ENCODE measurements at regions of chr2 and their contacts with region 1.

Region 1: DNA sequence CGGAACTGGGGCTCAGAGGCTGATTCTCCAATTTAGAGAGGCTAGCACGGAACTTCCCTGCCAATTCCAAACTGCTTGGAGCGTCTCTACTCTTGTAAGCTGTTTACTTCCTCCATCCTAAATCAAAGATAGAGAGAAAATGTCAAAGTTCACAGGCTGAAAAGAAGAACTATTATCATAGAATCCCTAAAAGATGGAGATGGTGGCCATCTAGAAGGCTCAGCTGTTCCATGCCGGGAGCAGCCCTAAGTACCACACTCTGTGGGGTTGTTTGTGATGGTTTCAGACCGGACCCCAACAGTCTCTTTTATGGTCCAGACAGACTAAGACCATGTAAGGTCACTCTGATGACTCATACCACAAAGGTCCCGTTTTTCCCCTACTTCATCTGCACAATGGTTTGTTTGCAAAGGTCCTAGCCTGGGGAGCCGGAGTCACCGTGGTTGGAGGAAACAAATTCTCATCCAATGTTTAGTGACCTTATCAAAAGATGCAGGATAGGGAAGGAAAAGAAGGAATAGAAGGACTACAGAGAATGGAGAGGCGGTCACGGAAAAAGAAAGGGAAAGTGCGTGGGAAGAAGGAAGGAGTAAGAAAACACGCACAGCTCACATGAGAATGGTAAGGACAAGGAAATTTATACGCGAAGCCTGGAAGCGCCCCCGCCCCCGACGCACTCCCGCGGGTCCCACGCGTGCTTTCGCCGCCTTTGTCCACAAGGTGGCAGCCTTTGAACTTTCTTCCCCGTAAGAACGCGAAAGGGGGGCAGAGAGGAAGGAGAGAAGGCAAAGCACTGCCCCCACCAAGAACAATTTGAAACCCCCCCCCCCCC is 453 bp upstream of the ANTXR1 start:
- DNase-seq: no peak
- H3K4me3 ChIP-seq: peak overlapping the region; percentile 90 to 95 (median 94)
- H3K27ac ChIP-seq: peak overlapping the region; percentile 44
- H3K4me1 ChIP-seq: peaks cover 13% of the 10 kb centered on the region
- H3K27me3 ChIP-seq: no peaks in the 10 kb centered on the region
- CTCF ChIP-seq: peak; percentile 54 to 77

Region 2: DNA sequence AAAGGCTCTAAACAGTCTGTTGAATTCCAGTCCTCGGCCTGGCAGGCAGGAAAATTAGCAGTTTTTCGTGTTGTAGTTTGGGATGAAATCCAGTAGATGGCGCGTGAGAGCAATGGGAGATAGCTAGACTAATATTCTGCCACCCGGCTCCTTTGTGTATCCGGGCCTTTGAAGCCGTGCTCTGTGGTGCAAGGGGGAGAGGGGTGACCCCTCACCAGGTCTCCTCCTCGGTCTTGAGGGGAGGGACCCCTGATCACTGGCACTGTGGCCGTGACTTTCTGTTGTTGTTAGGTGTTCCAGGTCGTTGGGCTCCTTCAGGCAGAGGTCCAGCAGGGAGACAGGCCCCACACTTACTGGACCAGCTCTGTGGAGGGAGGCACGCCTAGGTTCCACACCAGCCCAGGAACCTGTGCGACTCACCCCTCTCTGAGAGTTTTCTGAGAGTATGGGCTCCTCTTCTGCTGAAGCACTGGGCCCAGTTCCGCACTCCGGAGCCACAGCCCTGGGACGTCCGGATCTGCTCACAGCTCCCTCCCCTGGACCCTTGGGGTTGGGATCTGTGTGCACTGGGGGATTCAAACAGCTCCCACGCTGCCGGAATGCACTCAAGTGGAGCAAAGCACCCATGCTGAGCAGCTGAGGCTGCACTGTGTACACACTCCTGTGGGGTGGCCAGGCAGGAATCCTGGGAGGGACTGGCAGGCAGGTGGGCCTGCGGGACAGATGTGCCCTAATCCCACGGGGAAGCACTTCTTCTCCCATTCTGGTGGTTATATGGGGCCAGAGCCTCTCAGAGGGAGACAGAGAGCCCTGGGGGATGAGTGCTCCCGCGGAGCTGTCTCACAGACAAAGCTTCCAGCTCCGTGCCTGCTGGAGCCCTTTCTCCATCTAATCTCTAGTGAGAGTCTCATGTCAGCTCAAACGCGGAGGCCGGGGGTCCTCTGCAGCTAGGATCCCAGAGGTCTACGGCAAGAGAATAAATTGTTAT is 68.7 kb before region 1 on chr2:
- CTCF ChIA-PET with region 1: interaction called, 3 read pairs
- dilution Hi-C with region 1: no loop called
- in situ Hi-C with region 1: no loop called
- intact Hi-C with region 1: loop called (anchors 2 kb)
- DNase-seq: peak; percentile 61
- H3K4me3 ChIP-seq: no peak overlapping the region
- H3K27ac ChIP-seq: no peak overlapping the region
- H3K4me1 ChIP-seq: no peaks in the 10 kb centered on the region
- H3K27me3 ChIP-seq: no peaks in the 10 kb centered on the region
- CTCF ChIP-seq: peak; percentile 63 to 84

Region 3: DNA sequence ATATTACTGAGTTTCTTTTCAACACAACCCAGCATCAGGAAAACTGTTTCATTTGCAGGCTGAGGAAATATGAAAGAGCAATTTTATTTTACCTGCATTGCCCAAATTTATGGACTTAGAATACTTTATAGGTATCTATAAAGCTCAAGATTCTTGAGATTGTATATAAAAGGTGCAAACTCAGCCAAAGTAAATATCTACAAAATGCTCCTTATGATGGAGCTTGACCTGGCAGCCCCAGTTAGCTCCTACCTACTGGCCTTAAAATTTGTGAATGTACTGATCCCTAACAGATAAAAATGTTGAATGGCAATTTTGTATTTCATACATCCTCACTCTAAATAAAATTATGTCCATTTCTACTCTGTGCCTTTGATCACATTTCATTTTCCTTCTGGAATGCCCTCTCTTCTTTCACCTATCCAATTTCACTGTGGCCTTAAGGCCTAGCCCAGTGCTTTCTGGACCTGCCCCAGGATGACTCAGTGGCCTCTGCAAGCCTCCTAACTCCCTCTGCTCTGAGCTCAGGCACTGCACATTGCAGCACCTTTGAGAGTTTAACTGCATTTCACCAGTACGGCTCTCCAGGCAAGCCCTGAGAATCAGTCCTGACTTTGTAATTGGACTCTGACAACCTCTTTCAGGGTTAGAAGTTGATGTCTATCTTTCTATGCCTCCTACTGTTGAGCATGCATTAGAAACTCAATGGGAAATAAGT is 126.4 kb after region 1 on chr2:
- CTCF ChIA-PET with region 1: interaction called, 3 read pairs
- dilution Hi-C with region 1: no loop called
- in situ Hi-C with region 1: no loop called
- intact Hi-C with region 1: loop called (anchors 5 kb)
- DNase-seq: peak; percentile 81
- H3K4me3 ChIP-seq: no peak overlapping the region
- H3K27ac ChIP-seq: peak overlapping the region; percentile 64
- H3K4me1 ChIP-seq: peaks cover 32% of the 10 kb centered on the region
- H3K27me3 ChIP-seq: no peaks in the 10 kb centered on the region
- CTCF ChIP-seq: peak in 1 of 2 donors; percentile 3

Region 4: GRCh38 chr2:69298261-69298660 is 285.7 kb after region 1 on chr2:
- CTCF ChIA-PET with region 1: no interaction called
- dilution Hi-C with region 1: no loop called
- in situ Hi-C with region 1: no loop called
- intact Hi-C with region 1: loop called (anchors 2 kb)
- DNase-seq: peak; percentile 96
- H3K4me3 ChIP-seq: no peak overlapping the region
- H3K27ac ChIP-seq: no peak overlapping the region
- H3K4me1 ChIP-seq: peaks cover 14% of the 10 kb centered on the region
- H3K27me3 ChIP-seq: no peaks in the 10 kb centered on the region
- CTCF ChIP-seq: peak in 1 of 2 donors; percentile 8

Region 5: DNA sequence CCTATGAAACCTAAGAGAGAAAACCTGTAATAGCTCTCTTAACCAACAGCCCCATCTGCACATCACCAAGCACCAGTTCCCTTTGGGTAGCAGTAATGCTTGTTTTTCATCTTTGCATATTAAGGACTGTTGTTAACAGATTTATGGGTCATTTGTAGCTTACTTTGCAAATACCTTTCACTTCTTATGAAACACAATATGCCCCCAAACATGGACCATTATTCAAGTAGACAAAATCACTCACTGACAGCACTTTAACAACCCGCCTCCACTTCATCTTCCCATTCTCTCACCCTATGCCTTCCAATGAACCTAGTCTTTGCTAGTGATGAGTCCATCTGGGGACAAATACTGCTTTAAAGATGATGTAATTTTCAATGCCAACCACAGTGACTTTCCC is 310.1 kb after region 1 on chr2:
- CTCF ChIA-PET with region 1: interaction called, 11 read pairs
- dilution Hi-C with region 1: no loop called
- in situ Hi-C with region 1: no loop called
- intact Hi-C with region 1: no loop called
- DNase-seq: no peak
- H3K4me3 ChIP-seq: no peak overlapping the region
- H3K27ac ChIP-seq: no peak overlapping the region
- H3K4me1 ChIP-seq: peaks cover 11% of the 10 kb centered on the region
- H3K27me3 ChIP-seq: no peaks in the 10 kb centered on the region
- CTCF ChIP-seq: no peak